IMR-90 (cell line): ENCODE measurements at regions of chr17 and their contacts with region 1.

Region 1: GRCh38 chr17:63805591-63805990 is 21.6 kb upstream of the PSMC5 start:
- DNase-seq: no peak
- ATAC-seq: no peak
- H3K4me3 ChIP-seq: no peak overlapping the region
- H3K27ac ChIP-seq: peak overlapping the region; percentile 27; the same call in 1 of the 2 replicates
- H3K4me1 ChIP-seq: peaks cover 2% of the 10 kb centered on the region; the same call in 1 of the 2 replicates
- H3K27me3 ChIP-seq: no peaks in the 10 kb centered on the region
- CTCF ChIP-seq: no peak
- POLR2A ChIP-seq: no peak
- RAD21 ChIP-seq: no peak

Region 2: GRCh38 chr17:63675607-63676413 is 129.8 kb before region 1 on chr17:
- CTCF ChIA-PET with region 1: no interaction called
- POLR2A ChIA-PET with region 1: no interaction called
- dilution Hi-C with region 1: no loop called
- in situ Hi-C with region 1: no loop called
- intact Hi-C with region 1: no loop called
- DNase-seq: peak; percentile 83
- ATAC-seq: peak; percentile 89
- H3K4me3 ChIP-seq: no peak overlapping the region
- H3K27ac ChIP-seq: no peak overlapping the region
- H3K4me1 ChIP-seq: peaks cover 10% of the 10 kb centered on the region
- H3K27me3 ChIP-seq: no peaks in the 10 kb centered on the region
- CTCF ChIP-seq: no peak
- POLR2A ChIP-seq: no peak
- RAD21 ChIP-seq: no peak

Region 3: DNA sequence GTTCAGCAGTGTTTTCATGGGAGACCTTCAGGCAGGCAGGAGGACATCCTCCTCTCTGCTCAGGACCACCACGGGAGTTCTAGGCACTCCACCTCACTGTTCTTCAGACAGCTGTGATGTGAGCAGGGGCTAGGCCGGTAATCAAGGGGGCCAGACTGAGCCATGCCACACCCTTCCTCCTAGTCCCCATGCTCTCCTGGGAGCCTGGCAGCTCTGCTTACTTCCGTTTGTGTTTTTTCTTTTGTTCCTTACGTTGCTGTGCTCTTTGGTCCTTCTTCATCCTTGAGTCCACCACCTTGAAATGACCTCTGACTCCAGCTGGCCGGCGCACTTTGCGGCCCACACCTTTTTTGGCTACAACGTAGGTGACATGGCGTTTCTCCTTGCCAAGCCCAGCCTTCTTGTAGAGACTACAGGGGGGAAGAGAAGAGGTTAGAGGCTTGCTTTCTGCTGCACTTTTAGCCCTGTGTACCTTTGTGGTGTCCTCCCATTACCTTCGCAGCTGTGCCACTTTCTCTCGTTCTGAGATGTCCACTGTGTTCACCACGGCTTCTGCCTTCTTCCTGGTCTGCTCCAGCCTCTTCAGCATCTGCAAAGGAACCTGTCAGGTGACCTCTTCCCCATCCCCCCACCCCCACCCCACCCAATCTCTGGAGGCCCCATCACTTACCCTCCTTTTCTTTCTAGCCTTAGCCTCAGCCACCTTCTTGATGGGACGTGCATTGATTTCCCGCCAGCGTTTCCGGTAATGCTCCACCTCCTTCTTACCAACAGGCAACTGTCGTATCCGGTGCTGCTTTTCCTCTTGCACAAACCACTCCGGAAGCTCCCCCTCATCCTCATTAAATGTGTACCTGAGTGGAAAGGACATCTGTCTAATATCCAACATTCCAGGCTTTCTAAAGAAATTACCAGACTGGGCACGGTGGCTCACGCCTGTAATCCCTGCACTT is 14.3 kb after region 1 on chr17:
- CTCF ChIA-PET with region 1: no interaction called
- POLR2A ChIA-PET with region 1: no interaction called
- dilution Hi-C with region 1: no loop called
- in situ Hi-C with region 1: no loop called
- intact Hi-C with region 1: loop called (anchors 2 kb)
- DNase-seq: no peak
- ATAC-seq: no peak
- H3K4me3 ChIP-seq: no peak overlapping the region
- H3K27ac ChIP-seq: no peak overlapping the region
- H3K4me1 ChIP-seq: peaks cover 20% of the 10 kb centered on the region
- H3K27me3 ChIP-seq: no peaks in the 10 kb centered on the region
- CTCF ChIP-seq: no peak
- POLR2A ChIP-seq: no peak
- RAD21 ChIP-seq: no peak

Region 4: DNA sequence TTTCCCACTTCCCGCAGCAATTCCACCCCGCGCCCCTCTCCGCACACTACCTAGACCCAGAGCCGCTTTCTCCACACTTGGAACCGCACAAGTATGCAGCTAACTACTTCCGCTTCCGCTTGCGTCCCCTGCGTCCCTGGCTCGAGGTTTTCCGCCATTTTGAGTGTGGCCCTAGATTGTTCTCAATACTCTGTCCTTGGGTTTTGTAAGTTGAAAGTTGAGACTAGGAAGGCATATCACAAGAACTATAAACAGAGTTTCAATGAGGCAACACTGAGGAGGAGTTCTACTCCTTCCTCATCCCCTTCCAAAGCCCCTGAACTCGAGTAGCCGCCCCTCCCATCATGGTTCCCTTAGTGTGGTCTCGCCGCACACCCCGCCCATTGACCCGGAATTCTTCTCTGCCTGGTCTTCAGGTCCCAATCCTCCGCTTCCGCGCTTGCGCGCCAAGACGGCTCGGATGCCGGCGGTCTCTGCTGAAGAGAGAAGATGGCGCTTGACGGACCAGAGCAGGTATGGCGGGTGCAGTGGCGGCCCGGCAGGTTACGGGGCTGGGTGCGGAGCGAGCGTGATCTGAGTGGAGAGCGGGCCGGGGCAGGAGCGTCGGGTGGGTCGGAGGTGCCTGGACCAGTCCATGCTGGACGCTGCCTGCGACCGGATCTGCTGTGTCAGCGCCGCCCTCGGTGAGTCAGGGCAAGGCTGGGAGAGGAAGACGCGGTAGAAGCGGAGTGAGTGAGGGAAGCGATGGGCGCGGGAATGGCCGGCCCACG is 21.6 kb after region 1 on chr17 and contains the starts of genes FTSJ3 and PSMC5:
- CTCF ChIA-PET with region 1: no interaction called
- POLR2A ChIA-PET with region 1: no interaction called
- dilution Hi-C with region 1: no loop called
- in situ Hi-C with region 1: no loop called
- intact Hi-C with region 1: loop called (anchors 2 kb)
- DNase-seq: peak; percentile 93
- ATAC-seq: peak; percentile 94
- H3K4me3 ChIP-seq: peak within 1 kb of the TSS; percentile 79
- H3K27ac ChIP-seq: peak within 1 kb of the TSS; percentile 93
- H3K4me1 ChIP-seq: peaks cover 1% of the 10 kb centered on the region; the same call in 1 of the 2 replicates
- H3K27me3 ChIP-seq: no peaks in the 10 kb centered on the region
- CTCF ChIP-seq: peak; percentile 27
- POLR2A ChIP-seq: peak; percentile 88
- RAD21 ChIP-seq: no peak
- total RNA-seq, gene FTSJ3: 68.1 and 69.4 TPM in 2 replicates
- total RNA-seq, gene PSMC5: 104 and 105 TPM in 2 replicates

Region 5: GRCh38 chr17:63838603-63839171 is 33.1 kb after region 1 on chr17:
- CTCF ChIA-PET with region 1: no interaction called
- POLR2A ChIA-PET with region 1: no interaction called
- dilution Hi-C with region 1: no loop called
- in situ Hi-C with region 1: no loop called
- intact Hi-C with region 1: no loop called
- DNase-seq: peak; percentile 45
- ATAC-seq: no peak
- H3K4me3 ChIP-seq: no peak overlapping the region
- H3K27ac ChIP-seq: peak overlapping the region; percentile 44; the same call in 1 of the 2 replicates
- H3K4me1 ChIP-seq: peaks cover 21% of the 10 kb centered on the region
- H3K27me3 ChIP-seq: no peaks in the 10 kb centered on the region
- CTCF ChIP-seq: no peak
- POLR2A ChIP-seq: no peak
- RAD21 ChIP-seq: no peak

Region 6: DNA sequence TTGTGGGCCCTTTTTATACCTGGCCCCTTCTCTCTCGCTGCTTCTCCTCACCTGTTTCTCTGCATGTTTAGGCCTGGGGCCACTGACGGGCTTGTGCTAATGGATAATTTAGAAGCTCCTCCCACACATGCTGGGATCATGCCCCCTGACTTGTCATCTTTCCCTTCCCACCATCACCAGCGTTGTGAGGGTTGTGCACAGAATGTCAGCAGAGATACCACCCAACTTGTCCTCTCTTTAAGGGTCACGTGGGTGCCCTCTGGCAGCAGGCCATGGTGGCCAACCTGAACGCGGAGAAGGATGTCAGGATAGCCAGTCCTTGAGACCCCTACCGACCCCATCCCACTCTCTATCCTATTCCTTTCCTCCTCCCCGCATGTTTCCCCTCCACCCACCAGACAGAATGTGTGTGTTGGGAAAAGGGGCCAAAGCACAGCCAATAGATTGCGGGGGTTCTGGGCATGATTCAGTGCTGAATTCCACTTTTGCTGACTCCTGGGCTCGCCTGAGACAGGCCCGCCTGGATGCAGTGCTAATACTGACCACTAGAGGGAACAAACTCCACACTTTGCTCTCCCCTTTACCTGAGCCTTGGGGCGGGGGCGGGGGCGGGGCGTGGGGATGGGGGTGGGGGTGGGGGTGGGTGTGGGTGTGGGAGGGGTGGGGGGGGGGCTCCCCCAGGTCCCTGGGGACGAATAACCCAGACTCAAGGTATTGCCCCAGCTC is 76.4 kb after region 1 on chr17 and contains the start of gene GH2:
- CTCF ChIA-PET with region 1: no interaction called
- POLR2A ChIA-PET with region 1: no interaction called
- dilution Hi-C with region 1: no loop called
- in situ Hi-C with region 1: no loop called
- intact Hi-C with region 1: no loop called
- DNase-seq: peak; percentile 34
- ATAC-seq: peak; percentile 93
- H3K4me3 ChIP-seq: no peak within 1 kb of the TSS
- H3K27ac ChIP-seq: no peak within 1 kb of the TSS
- H3K4me1 ChIP-seq: no peaks in the 10 kb centered on the region
- H3K27me3 ChIP-seq: peaks cover 22% of the 10 kb centered on the region
- CTCF ChIP-seq: peak; percentile 44
- POLR2A ChIP-seq: no peak
- RAD21 ChIP-seq: no peak
- total RNA-seq, gene GH2: not detected in 2 replicates